HEK293 (cell line): ENCODE measurements at regions of chr21 and their contacts with region 1.

Region 1: GRCh38 chr21:33025489-33026442 is at the start of gene OLIG2:
- H3K4me3 ChIP-seq: peak within 1 kb of the TSS; percentile 48
- H3K27ac ChIP-seq: no peak within 1 kb of the TSS; the same call in 1 of the 2 replicates
- H3K4me1 ChIP-seq: no peaks in the 10 kb centered on the region
- CTCF ChIP-seq: no peak

Region 2: GRCh38 chr21:33036430-33037162 is 10.8 kb after region 1 on chr21:
- CTCF ChIA-PET with region 1: interaction called, 5 read pairs
- POLR2A ChIA-PET with region 1: interaction called, 11 read pairs
- H3K4me3 ChIP-seq: no peak overlapping the region
- H3K27ac ChIP-seq: no peak overlapping the region
- H3K4me1 ChIP-seq: no peaks in the 10 kb centered on the region
- CTCF ChIP-seq: no peak